Mammary epithelial cell (primary cell): ENCODE measurements at regions of chr15 and their contacts with region 1.

Region 1: GRCh38 chr15:80870893-80871292 is 91.7 kb downstream of the CEMIP start:
- DNase-seq: no peak
- H3K4me3 ChIP-seq: no peak overlapping the region
- H3K27ac ChIP-seq: no peak overlapping the region
- H3K4me1 ChIP-seq: no peaks in the 10 kb centered on the region
- H3K27me3 ChIP-seq: peaks cover 2% of the 10 kb centered on the region
- CTCF ChIP-seq: no peak

Region 2: DNA sequence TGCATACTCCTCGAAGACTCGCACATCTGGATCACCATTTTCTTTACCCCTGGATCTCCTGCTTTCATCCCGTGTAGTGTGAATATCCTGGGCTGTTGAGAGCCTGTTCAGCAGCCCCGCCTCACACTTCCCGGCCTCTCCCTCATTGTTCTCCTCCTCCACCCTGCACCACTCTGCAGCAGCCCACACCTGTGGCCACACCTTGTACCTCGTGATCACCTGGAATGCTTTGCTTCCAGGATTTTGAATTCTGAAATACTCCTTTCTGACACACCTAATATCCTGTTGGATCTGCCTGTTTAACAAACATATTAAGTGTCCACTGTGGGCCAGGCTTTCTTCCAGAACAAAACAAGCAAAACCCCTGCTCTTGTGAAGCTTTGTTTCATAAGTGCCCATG is 161.3 kb before region 1 on chr15:
- CTCF ChIA-PET with region 1: no interaction called
- dilution Hi-C with region 1: loop called (anchors 5 kb)
- in situ Hi-C with region 1: no loop called
- intact Hi-C with region 1: no loop called
- DNase-seq: peak; percentile 75
- H3K4me3 ChIP-seq: no peak overlapping the region
- H3K27ac ChIP-seq: peak overlapping the region; percentile 68
- H3K4me1 ChIP-seq: peaks cover 24% of the 10 kb centered on the region
- H3K27me3 ChIP-seq: no peaks in the 10 kb centered on the region
- CTCF ChIP-seq: no peak

Region 3: GRCh38 chr15:80788536-80788935 is 82.4 kb before region 1 on chr15:
- CTCF ChIA-PET with region 1: no interaction called
- dilution Hi-C with region 1: loop called (anchors 5 kb)
- in situ Hi-C with region 1: no loop called
- intact Hi-C with region 1: no loop called
- DNase-seq: no peak
- H3K4me3 ChIP-seq: no peak overlapping the region
- H3K27ac ChIP-seq: no peak overlapping the region
- H3K4me1 ChIP-seq: peaks cover 6% of the 10 kb centered on the region
- H3K27me3 ChIP-seq: no peaks in the 10 kb centered on the region
- CTCF ChIP-seq: no peak

Region 4: GRCh38 chr15:80883641-80884040 is 12.7 kb after region 1 on chr15:
- CTCF ChIA-PET with region 1: no interaction called
- dilution Hi-C with region 1: no loop called
- in situ Hi-C with region 1: no loop called
- intact Hi-C with region 1: loop called (anchors 2 kb)
- DNase-seq: no peak
- H3K4me3 ChIP-seq: no peak overlapping the region
- H3K27ac ChIP-seq: no peak overlapping the region
- H3K4me1 ChIP-seq: no peaks in the 10 kb centered on the region
- H3K27me3 ChIP-seq: peaks cover 5% of the 10 kb centered on the region
- CTCF ChIP-seq: no peak

Region 5: DNA sequence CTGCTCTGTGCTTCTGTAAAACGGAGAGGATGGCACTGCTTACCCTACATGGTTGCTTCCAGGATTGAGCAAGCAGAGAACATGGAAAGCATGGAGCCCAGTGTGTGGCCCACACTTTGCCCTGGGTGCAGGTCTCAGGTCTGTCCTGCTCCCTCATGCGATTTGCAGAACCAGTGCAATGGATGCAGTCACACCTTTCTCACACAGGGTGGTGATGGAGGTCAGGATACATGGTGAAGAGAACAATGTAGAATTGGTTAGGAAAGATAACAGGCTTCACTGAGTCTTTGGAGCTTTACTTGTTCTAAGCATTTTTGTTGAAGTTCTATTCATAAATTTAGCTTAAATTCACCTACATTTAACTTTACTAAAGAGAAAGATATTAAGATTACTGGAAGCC is 40.2 kb after region 1 on chr15:
- CTCF ChIA-PET with region 1: no interaction called
- dilution Hi-C with region 1: loop called (anchors 5 kb)
- in situ Hi-C with region 1: no loop called
- intact Hi-C with region 1: no loop called
- DNase-seq: no peak
- H3K4me3 ChIP-seq: no peak overlapping the region
- H3K27ac ChIP-seq: no peak overlapping the region
- H3K4me1 ChIP-seq: no peaks in the 10 kb centered on the region
- H3K27me3 ChIP-seq: no peaks in the 10 kb centered on the region
- CTCF ChIP-seq: peak in 1 of 2 donors; percentile 22

Region 6: GRCh38 chr15:80942746-80943555 is 72.1 kb after region 1 on chr15:
- CTCF ChIA-PET with region 1: no interaction called
- dilution Hi-C with region 1: no loop called
- in situ Hi-C with region 1: no loop called
- intact Hi-C with region 1: no loop called
- DNase-seq: no peak
- H3K4me3 ChIP-seq: no peak overlapping the region
- H3K27ac ChIP-seq: no peak overlapping the region
- H3K4me1 ChIP-seq: no peaks in the 10 kb centered on the region
- H3K27me3 ChIP-seq: no peaks in the 10 kb centered on the region
- CTCF ChIP-seq: no peak